CD4-positive, alpha-beta T cell (primary cell): ENCODE measurements at regions of chr20 and their contacts with region 1.

Region 1: GRCh38 chr20:8305449-8305978 is 173.4 kb downstream of the PLCB1 start:
- DNase-seq: peak; percentile 44 to 88 (median 58)
- ATAC-seq: peak; percentile 98
- H3K4me3 ChIP-seq: no peak overlapping the region
- H3K4me3 Mint-ChIP-seq: no peak overlapping the region
- H3K27ac ChIP-seq: no peak overlapping the region
- H3K27ac Mint-ChIP-seq: no peak overlapping the region
- H3K4me1 ChIP-seq: peaks cover 5% of the 10 kb centered on the region
- H3K4me1 Mint-ChIP-seq: peaks cover 10% of the 10 kb centered on the region
- H3K27me3 ChIP-seq: no peaks in the 10 kb centered on the region
- H3K27me3 Mint-ChIP-seq: no peaks in the 10 kb centered on the region
- CTCF ChIP-seq: peak; percentile 66

Region 2: DNA sequence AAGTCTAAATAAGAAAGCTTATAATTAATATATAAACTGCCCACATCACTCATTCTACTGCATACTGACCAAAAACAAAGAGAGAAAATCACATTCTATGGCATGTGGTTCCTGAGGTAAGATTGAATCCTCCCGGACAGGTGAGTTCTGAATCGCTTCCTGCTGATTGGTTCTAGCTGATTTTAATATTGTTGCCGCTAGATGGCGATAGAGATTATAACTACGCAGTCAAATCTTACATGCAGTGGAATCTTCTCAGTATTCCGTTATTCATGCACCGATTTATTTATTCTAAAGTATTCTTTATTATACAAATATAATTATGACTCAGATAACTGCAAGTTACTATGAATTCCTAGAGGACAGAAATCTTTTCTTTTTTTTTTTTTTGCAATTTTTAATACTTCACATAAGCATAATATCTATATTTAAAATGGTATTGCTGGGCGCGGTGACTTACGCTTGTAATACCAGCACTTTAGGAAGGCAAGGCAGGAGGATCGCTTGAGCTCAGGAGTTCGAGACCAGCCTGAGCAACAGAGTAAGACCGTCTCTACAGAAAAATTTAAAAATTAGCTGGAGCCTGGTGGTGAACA is 261.7 kb before region 1 on chr20:
- CTCF ChIA-PET with region 1: interaction called, 4 read pairs
- POLR2A ChIA-PET with region 1: no interaction called
- intact Hi-C with region 1: loop called (anchors 1 to 5 kb)
- DNase-seq: peak in 4 of 14 experiments; percentile 39 to 82 (median 79)
- ATAC-seq: peak; percentile 85
- H3K4me3 ChIP-seq: no peak overlapping the region
- H3K4me3 Mint-ChIP-seq: no peak overlapping the region
- H3K27ac ChIP-seq: no peak overlapping the region
- H3K27ac Mint-ChIP-seq: no peak overlapping the region
- H3K4me1 ChIP-seq: no peaks in the 10 kb centered on the region
- H3K4me1 Mint-ChIP-seq: peaks cover 4% of the 10 kb centered on the region
- H3K27me3 ChIP-seq: peaks cover 0 to 7% of the 10 kb centered on the region in 2 experiments
- H3K27me3 Mint-ChIP-seq: peaks cover 9% of the 10 kb centered on the region
- CTCF ChIP-seq: peak; percentile 84

Region 3: DNA sequence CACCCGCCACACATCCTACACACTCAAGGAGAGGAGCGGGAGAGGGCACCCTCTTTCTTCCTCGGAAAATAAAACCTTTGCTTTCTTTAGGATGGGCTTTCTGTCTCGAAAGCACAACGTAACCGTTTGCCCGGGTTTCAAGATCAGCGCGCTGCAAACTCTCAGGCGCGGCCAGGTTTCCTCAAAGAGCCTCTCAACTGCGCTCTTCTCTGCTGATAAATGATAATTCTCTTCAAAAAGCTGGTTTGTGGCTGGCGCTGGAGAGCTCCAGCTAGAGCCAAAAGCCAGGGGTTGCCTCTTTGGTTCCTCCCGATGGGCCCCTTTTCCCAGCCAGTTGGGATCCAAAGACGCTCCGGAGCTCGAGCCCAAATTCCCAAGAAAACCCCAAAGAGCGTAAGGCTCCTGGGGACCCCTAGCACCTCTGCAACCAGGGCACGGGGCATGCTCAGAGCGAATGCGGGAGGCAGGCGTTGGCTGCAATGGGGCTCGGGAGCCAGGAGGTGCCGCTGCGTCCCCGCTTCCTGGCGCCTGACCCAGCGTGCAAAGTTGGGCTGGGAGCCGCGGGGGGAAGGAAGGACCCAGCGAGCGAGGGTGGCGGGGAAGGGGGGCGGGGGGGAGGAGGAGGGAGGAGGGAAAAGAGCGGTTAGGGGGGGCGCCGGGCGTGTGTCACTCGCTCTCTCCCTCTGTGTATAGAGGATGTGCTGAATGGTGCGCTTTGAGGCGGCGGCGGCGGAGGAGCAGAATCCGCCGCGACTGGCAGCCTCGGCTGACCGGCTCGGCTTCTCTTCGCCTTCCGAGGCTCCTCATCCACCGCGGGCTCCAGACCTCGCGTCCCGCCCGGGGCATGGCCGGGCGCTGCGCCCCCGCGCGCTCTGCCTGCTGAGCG is 173.7 kb before region 1 on chr20 and contains the start of gene PLCB1:
- CTCF ChIA-PET with region 1: no interaction called
- POLR2A ChIA-PET with region 1: no interaction called
- intact Hi-C with region 1: loop called (anchors 1 kb)
- DNase-seq: peak; percentile 54 to 91 (median 68)
- ATAC-seq: peak; percentile 91
- H3K4me3 ChIP-seq: peak within 1 kb of the TSS; percentile 64
- H3K4me3 Mint-ChIP-seq: peak within 1 kb of the TSS; percentile 87
- H3K27ac ChIP-seq: no peak within 1 kb of the TSS
- H3K27ac Mint-ChIP-seq: peak within 1 kb of the TSS; percentile 45
- H3K4me1 ChIP-seq: peaks cover 14% of the 10 kb centered on the region
- H3K4me1 Mint-ChIP-seq: peaks cover 30% of the 10 kb centered on the region
- H3K27me3 ChIP-seq: peaks cover 0 to 6% of the 10 kb centered on the region in 2 experiments
- H3K27me3 Mint-ChIP-seq: peaks cover 42% of the 10 kb centered on the region
- CTCF ChIP-seq: peak; percentile 70
- total RNA-seq, gene PLCB1: 3.8 to 5.6 TPM